ENCODE measurements at regions of chr12 and their contacts with region 1.

Region 1: DNA sequence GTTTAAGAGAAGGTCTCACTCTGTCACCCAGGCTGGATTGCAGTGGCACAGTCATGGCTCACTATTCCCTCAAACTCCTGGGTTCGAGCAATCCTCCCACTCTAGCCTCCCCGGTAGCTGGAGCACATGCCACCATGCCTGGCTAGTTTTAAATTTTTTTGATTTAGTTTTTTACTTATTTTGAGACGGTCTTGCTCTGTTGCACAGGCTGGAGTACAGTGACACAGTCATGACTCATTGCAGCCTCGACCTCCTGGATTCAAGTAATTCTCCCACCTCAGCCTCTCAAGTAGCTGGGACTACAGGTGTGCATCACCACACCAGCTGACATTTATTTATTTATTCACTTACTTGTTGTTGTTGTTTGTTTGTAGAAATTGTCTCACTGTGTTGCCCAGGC is 22.2 kb upstream of the DIP2B start:
- DNase-seq: no peak
- H3K4me3 ChIP-seq: no peak overlapping the region
- H3K27ac ChIP-seq: no peak overlapping the region
- H3K27me3 ChIP-seq: no peaks in the 10 kb centered on the region
- CTCF ChIP-seq: no peak

Region 2: GRCh38 chr12:50659690-50660424 is 177.3 kb after region 1 on chr12:
- intact Hi-C with region 1: no loop called
- DNase-seq: no peak
- H3K4me3 ChIP-seq: no peak overlapping the region
- H3K27ac ChIP-seq: peak overlapping the region in 58 of 59 donors; percentile 12 to 99 (median 90)
- H3K27me3 ChIP-seq: no peaks in the 10 kb centered on the region
- CTCF ChIP-seq: no peak

Region 3: GRCh38 chr12:50992819-50993218 is 510.3 kb after region 1 on chr12:
- intact Hi-C with region 1: loop called in 1 of 2 experiments (anchors 10 kb)
- DNase-seq: peak in 1 of 10 donors; percentile 15
- H3K4me3 ChIP-seq: no peak overlapping the region
- H3K27ac ChIP-seq: peak overlapping the region in 18 of 59 donors; percentile 4 to 59 (median 29)
- H3K27me3 ChIP-seq: no peaks in the 10 kb centered on the region
- CTCF ChIP-seq: no peak

Measured in dorsolateral prefrontal cortex (tissue), 120 donors.